HEK293 (cell line): ENCODE measurements at regions of chr16 and their contacts with region 1.

Region 1: GRCh38 chr16:78125112-78125844 is 25.8 kb downstream of the WWOX start:
- H3K4me3 ChIP-seq: no peak overlapping the region
- H3K27ac ChIP-seq: no peak overlapping the region
- H3K4me1 ChIP-seq: peaks cover 15% of the 10 kb centered on the region
- CTCF ChIP-seq: no peak

Region 2: GRCh38 chr16:78163772-78164670 is 38.7 kb after region 1 on chr16:
- CTCF ChIA-PET with region 1: no interaction called
- POLR2A ChIA-PET with region 1: no interaction called
- H3K4me3 ChIP-seq: no peak overlapping the region
- H3K27ac ChIP-seq: no peak overlapping the region
- H3K4me1 ChIP-seq: no peaks in the 10 kb centered on the region
- CTCF ChIP-seq: 0 out of 2 replicates have a peak, but pooled peaks have one; percentile 8

Region 3: GRCh38 chr16:78235168-78235800 is 110.0 kb after region 1 on chr16:
- CTCF ChIA-PET with region 1: interaction called, 15 read pairs
- POLR2A ChIA-PET with region 1: no interaction called
- H3K4me3 ChIP-seq: no peak overlapping the region
- H3K27ac ChIP-seq: no peak overlapping the region
- H3K4me1 ChIP-seq: peaks cover 4% of the 10 kb centered on the region; the same call in 1 of the 2 replicates
- CTCF ChIP-seq: peak; percentile 80